ENCODE measurements at regions of chr10 and their contacts with region 1.

Region 1: GRCh38 chr10:52308251-52309031 is 5.6 kb upstream of the DKK1 start:
- DNase-seq: peak; percentile 20
- ATAC-seq: peak; percentile 69
- H3K4me3 Mint-ChIP-seq: peak overlapping the region; percentile 81
- H3K27ac Mint-ChIP-seq: no peak overlapping the region
- H3K4me1 Mint-ChIP-seq: peaks cover 13% of the 10 kb centered on the region
- H3K27me3 Mint-ChIP-seq: peaks cover 35% of the 10 kb centered on the region
- CTCF ChIP-seq: no peak

Region 2: GRCh38 chr10:52488606-52489485 is 180.4 kb after region 1 on chr10:
- CTCF ChIA-PET with region 1: interaction called, 33 read pairs
- POLR2A ChIA-PET with region 1: no interaction called
- intact Hi-C with region 1: loop called (anchors 1 kb)
- DNase-seq: no peak
- ATAC-seq: no peak
- H3K4me3 Mint-ChIP-seq: no peak overlapping the region
- H3K27ac Mint-ChIP-seq: no peak overlapping the region
- H3K4me1 Mint-ChIP-seq: peaks cover 1% of the 10 kb centered on the region
- H3K27me3 Mint-ChIP-seq: no peaks in the 10 kb centered on the region
- CTCF ChIP-seq: no peak

Region 3: DNA sequence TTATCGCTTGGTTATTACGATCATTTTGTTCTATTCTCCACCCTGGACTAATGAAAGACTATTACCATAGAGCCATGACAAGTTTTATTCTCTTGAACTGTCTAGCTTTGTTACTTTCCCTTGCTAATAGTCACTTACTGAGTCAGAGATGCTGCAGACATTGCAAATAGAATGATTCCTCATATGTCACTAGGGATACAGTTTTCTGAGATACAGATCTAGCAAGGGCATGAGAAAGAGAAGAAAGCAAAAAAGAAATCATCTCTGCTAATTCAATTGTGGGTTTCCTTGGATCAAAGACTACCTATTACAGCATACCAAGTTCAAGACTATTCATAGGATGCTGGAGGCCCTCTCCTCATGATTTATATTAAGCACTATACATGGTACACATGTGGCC is 259.9 kb after region 1 on chr10:
- CTCF ChIA-PET with region 1: interaction called, 4 read pairs
- POLR2A ChIA-PET with region 1: no interaction called
- intact Hi-C with region 1: loop called (anchors 2 kb)
- DNase-seq: no peak
- ATAC-seq: no peak
- H3K4me3 Mint-ChIP-seq: no peak overlapping the region
- H3K27ac Mint-ChIP-seq: no peak overlapping the region
- H3K4me1 Mint-ChIP-seq: no peaks in the 10 kb centered on the region
- H3K27me3 Mint-ChIP-seq: no peaks in the 10 kb centered on the region
- CTCF ChIP-seq: no peak

Region 4: GRCh38 chr10:52597189-52597863 is 288.9 kb after region 1 on chr10:
- CTCF ChIA-PET with region 1: no interaction called
- POLR2A ChIA-PET with region 1: no interaction called
- intact Hi-C with region 1: loop called (anchors 1 kb)
- DNase-seq: no peak
- ATAC-seq: no peak
- H3K4me3 Mint-ChIP-seq: no peak overlapping the region
- H3K27ac Mint-ChIP-seq: no peak overlapping the region
- H3K4me1 Mint-ChIP-seq: no peaks in the 10 kb centered on the region
- H3K27me3 Mint-ChIP-seq: no peaks in the 10 kb centered on the region
- CTCF ChIP-seq: no peak

Region 5: GRCh38 chr10:52779541-52780390 is 471.3 kb after region 1 on chr10:
- CTCF ChIA-PET with region 1: interaction called, 3 read pairs
- POLR2A ChIA-PET with region 1: no interaction called
- intact Hi-C with region 1: loop called (anchors 1 kb)
- DNase-seq: no peak
- ATAC-seq: peak; percentile 28
- H3K4me3 Mint-ChIP-seq: no peak overlapping the region
- H3K27ac Mint-ChIP-seq: no peak overlapping the region
- H3K4me1 Mint-ChIP-seq: no peaks in the 10 kb centered on the region
- H3K27me3 Mint-ChIP-seq: no peaks in the 10 kb centered on the region
- CTCF ChIP-seq: no peak